Endothelial cell of umbilical vein (primary cell): ENCODE measurements at regions of chr11 and their contacts with region 1.

Region 1: DNA sequence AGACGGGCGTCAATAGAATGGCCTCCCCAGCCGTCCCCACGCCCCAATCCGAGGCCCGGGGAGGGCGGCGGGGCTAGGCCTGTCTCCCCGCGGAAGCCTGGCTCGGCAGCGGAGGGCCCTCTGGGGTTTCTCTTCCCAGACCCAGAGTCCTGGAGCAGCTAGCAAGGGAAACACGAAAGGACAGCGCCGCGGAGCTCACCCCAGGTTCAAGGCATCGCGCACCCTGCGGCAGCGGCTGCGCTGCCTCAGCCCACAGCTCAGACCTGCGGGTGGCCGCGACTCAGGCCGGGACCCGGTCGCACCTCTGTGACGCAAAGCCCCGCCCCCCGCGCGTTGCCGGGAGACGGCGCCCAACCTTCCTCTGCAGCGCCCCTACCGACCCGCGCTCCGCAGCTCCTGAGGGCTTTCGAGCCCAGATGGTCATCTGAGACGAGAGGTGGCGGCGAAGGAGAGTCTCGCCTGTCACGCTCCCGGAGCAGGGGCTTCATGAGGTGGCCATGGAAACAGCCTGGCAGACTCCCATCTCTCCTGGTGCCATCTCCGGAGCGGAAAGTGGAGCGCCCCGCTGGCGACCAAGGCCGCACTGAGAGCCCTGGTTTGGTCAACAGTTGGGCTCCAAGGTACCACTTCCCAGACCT is at the start of gene RNF141:
- DNase-seq: peak; percentile 94
- H3K4me3 ChIP-seq: peak within 1 kb of the TSS; percentile 37 to 83 (median 59)
- H3K27ac ChIP-seq: peak within 1 kb of the TSS; percentile 57
- H3K4me1 ChIP-seq: peaks cover 10% of the 10 kb centered on the region
- H3K27me3 ChIP-seq: no peaks in the 10 kb centered on the region
- CTCF ChIP-seq: peak; percentile 87 to 93
- POLR2A ChIP-seq: peak; percentile 94
- total RNA-seq, gene RNF141: 31.8 and 32.4 TPM in 2 replicates

Region 2: DNA sequence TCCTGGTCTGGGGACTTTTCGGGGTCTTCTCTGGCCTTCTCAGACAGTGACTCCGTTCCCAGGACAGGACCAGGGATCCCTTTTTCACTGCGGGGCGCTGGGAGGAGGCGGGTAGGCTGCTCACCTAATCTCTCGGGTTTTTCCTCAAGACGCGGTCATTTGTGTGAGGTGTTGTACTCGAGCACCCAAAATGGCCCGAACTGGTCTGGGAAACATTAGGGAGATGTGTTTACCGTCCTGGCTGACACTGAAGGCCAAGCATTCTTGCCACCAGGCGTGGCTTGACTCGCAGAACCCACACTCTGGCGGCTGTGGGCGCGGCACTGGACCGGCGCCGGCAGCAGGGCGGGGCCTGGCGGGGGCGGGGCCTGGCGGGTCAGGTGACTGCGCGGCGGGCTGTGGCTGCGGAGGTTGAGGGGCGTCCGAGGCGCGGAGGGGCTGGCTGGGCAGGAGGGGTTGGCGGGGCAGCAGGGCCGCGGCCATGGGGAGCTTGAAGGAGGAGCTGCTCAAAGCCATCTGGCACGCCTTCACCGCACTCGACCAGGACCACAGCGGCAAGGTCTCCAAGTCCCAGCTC is 877.3 kb before region 1 on chr11 and contains the start of gene SWAP70:
- CTCF ChIA-PET with region 1: no interaction called
- POLR2A ChIA-PET with region 1: no interaction called
- dilution Hi-C with region 1: no loop called
- intact Hi-C with region 1: loop called (anchors 5 kb)
- DNase-seq: peak; percentile 89
- H3K4me3 ChIP-seq: peak within 1 kb of the TSS; percentile 57 to 97 (median 63)
- H3K27ac ChIP-seq: peak within 1 kb of the TSS; percentile 93
- H3K4me1 ChIP-seq: peaks cover 18% of the 10 kb centered on the region
- H3K27me3 ChIP-seq: no peaks in the 10 kb centered on the region
- CTCF ChIP-seq: peak in 1 of 2 donors; percentile 41
- POLR2A ChIP-seq: peak; percentile 89
- total RNA-seq, gene SWAP70: 156 and 165 TPM in 2 replicates

Region 3: GRCh38 chr11:10044618-10045017 is 496.4 kb before region 1 on chr11:
- CTCF ChIA-PET with region 1: no interaction called
- POLR2A ChIA-PET with region 1: no interaction called
- dilution Hi-C with region 1: no loop called
- intact Hi-C with region 1: no loop called
- DNase-seq: no peak
- H3K4me3 ChIP-seq: no peak overlapping the region
- H3K27ac ChIP-seq: no peak overlapping the region
- H3K4me1 ChIP-seq: peaks cover 5% of the 10 kb centered on the region
- H3K27me3 ChIP-seq: no peaks in the 10 kb centered on the region
- CTCF ChIP-seq: no peak
- POLR2A ChIP-seq: no peak

Region 4: GRCh38 chr11:10181811-10182210 is 359.2 kb before region 1 on chr11:
- CTCF ChIA-PET with region 1: no interaction called
- POLR2A ChIA-PET with region 1: no interaction called
- dilution Hi-C with region 1: no loop called
- intact Hi-C with region 1: no loop called
- DNase-seq: peak; percentile 48
- H3K4me3 ChIP-seq: no peak overlapping the region
- H3K27ac ChIP-seq: no peak overlapping the region
- H3K4me1 ChIP-seq: no peaks in the 10 kb centered on the region
- H3K27me3 ChIP-seq: no peaks in the 10 kb centered on the region
- CTCF ChIP-seq: peak; percentile 14 to 16
- POLR2A ChIP-seq: no peak

Region 5: DNA sequence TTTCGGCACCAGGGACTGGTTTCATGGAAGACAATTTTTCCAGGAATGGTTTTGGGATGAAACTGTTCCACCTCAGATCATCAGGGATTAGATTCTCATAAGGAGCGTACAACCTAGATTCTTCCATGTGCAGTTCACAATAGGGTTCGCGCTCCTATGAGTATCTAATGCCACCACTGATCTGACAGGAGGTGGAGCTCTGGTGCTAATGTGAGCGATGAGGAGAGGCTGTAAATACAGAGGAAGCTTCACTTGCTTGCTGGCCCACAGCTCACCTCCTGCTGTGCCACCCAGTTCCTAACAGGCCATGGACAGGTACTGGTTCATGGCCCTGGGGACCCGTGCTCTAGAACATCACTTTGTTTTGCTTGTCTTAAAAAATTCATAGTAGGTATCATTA is 127.8 kb before region 1 on chr11:
- CTCF ChIA-PET with region 1: interaction called, 10 read pairs
- POLR2A ChIA-PET with region 1: no interaction called
- dilution Hi-C with region 1: no loop called
- intact Hi-C with region 1: no loop called
- DNase-seq: peak; percentile 20
- H3K4me3 ChIP-seq: no peak overlapping the region
- H3K27ac ChIP-seq: no peak overlapping the region
- H3K4me1 ChIP-seq: peaks cover 13% of the 10 kb centered on the region
- H3K27me3 ChIP-seq: peaks cover 2 to 5% of the 10 kb centered on the region in 2 experiments
- CTCF ChIP-seq: peak in 1 of 2 donors; percentile 16
- POLR2A ChIP-seq: no peak

Region 6: DNA sequence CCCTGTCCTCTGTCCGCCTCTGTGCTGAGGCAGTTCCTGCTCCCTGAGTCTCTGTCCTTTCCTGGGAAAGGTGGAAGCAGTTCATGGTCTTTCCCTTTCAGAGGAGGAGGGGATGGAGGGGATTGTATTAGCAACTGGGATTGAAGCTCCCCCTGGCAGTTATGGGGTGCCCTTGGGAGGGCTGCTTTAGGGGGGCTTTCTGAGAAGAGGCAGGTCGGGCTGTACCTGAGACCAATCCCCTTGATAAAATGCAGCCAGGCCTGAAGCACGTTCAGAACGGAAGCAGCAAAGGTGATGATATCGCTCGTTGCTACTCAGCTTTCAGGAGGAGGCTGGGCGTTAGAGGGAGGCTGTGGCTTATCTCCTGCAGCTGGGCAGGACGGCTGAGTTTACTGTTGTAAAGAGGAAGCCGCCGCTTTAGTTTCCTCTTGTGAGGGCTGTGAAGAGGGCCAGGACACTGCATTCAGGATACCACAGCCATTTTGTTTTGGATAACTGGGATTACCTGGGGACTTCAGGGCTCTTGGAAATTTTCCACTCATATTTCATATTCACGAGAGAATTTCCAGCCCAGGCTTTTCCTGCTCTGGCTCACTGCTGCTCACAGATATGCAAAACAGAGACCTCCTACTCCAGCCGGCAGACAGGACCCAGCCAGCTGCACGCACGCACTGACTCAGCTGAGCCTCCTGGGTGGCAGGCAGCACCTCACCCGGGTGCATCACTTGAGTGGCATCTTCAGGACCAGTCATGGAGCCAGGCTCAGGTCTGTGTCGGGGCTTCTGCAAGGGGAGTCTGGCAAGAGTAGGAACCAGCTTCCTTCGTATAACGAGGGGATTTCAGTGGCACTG is 85.2 kb before region 1 on chr11:
- CTCF ChIA-PET with region 1: no interaction called
- POLR2A ChIA-PET with region 1: no interaction called
- dilution Hi-C with region 1: no loop called
- intact Hi-C with region 1: no loop called
- DNase-seq: peak; percentile 38
- H3K4me3 ChIP-seq: peak overlapping the region in 1 of 3 experiments; percentile 11
- H3K27ac ChIP-seq: no peak overlapping the region
- H3K4me1 ChIP-seq: peaks cover 4% of the 10 kb centered on the region
- H3K27me3 ChIP-seq: peaks cover 0 to 11% of the 10 kb centered on the region in 2 experiments
- CTCF ChIP-seq: no peak
- POLR2A ChIP-seq: no peak

Region 7: DNA sequence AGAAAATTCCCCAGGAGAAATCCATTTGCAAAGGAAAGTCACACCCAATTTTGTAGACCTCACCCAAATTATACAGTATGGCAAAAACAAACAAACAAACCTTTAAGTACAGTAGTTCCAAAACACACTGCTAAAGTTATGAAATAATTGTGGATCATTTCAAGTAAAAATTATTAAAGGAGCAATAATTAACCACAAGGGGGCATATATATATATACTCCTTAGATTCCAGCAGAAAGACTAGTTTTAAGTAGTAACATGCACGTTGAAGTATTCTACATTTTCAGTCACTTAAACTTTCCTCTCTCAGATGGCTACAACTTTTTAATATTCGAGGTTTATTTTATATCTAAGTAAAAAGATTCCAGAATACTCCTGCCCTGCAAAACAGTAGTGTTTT is 26.8 kb before region 1 on chr11:
- CTCF ChIA-PET with region 1: interaction called, 31 read pairs
- POLR2A ChIA-PET with region 1: interaction called, 4 read pairs
- dilution Hi-C with region 1: no loop called
- intact Hi-C with region 1: loop called (anchors 1 kb)
- DNase-seq: peak; percentile 52
- H3K4me3 ChIP-seq: no peak overlapping the region
- H3K27ac ChIP-seq: no peak overlapping the region
- H3K4me1 ChIP-seq: peaks cover 7% of the 10 kb centered on the region
- H3K27me3 ChIP-seq: no peaks in the 10 kb centered on the region
- CTCF ChIP-seq: peak; percentile 5 to 10
- POLR2A ChIP-seq: no peak

Region 8: GRCh38 chr11:10558288-10558687 is 17.2 kb after region 1 on chr11:
- CTCF ChIA-PET with region 1: interaction called, 20 read pairs
- POLR2A ChIA-PET with region 1: no interaction called
- dilution Hi-C with region 1: no loop called
- intact Hi-C with region 1: loop called (anchors 2 kb)
- DNase-seq: no peak
- H3K4me3 ChIP-seq: no peak overlapping the region
- H3K27ac ChIP-seq: no peak overlapping the region
- H3K4me1 ChIP-seq: peaks cover 5% of the 10 kb centered on the region
- H3K27me3 ChIP-seq: no peaks in the 10 kb centered on the region
- CTCF ChIP-seq: no peak
- POLR2A ChIP-seq: no peak

Region 9: DNA sequence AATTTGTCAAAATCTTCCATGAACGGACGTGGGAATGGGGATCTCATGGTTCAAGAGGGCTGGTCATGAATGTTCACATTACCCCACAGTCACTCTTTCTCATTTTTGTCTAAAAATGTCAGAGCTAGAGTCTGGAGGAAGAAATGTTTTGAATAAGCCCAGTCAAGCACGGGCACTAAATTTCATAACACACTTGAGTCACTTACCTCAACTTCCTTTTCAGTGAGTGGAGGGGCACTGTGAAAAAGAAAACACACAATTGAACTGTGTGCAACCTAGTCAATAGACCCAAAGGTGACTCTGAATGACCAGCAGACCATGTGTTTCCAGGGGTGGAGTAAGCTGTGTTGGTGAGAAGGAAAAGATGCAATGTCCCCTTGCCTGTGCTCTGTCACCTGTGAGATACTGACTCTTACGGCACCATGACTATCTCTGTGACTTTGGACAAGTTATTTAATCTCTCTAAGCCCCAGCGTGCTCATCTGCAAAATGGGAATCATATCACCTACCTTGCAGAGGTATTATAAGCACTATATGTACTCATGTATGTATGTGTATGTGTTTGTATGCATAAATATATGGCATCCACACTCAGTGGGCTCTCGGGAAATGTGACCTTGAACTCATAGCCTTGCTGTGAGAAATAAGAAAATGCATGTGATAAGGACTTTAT is 65.6 kb after region 1 on chr11:
- CTCF ChIA-PET with region 1: interaction called, 9 read pairs
- POLR2A ChIA-PET with region 1: interaction called, 3 read pairs
- dilution Hi-C with region 1: no loop called
- intact Hi-C with region 1: loop called (anchors 2 kb)
- DNase-seq: peak; percentile 79
- H3K4me3 ChIP-seq: no peak overlapping the region
- H3K27ac ChIP-seq: peak overlapping the region; percentile 25
- H3K4me1 ChIP-seq: peaks cover 29% of the 10 kb centered on the region
- H3K27me3 ChIP-seq: peaks cover 0 to 1% of the 10 kb centered on the region in 2 experiments
- CTCF ChIP-seq: no peak
- POLR2A ChIP-seq: no peak

Region 10: DNA sequence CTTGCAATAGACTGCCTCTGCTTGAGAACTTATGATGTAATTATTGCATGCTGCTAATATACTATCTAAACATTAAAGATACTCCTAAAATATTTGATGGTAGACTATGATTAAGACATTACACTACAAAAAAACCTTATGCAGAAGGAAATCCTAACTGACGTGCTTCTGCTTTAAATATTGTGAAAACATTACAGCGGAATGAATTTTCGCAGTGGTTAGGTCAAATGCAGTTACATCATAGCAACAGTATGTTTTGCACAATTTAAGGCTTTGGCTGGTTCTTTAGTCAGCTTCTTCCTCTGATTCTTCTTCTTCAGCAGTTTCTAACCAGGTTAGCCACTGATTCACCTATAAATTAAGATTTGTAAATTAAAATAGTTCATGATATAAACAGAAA is 256.5 kb after region 1 on chr11:
- CTCF ChIA-PET with region 1: no interaction called
- POLR2A ChIA-PET with region 1: no interaction called
- dilution Hi-C with region 1: no loop called
- intact Hi-C with region 1: no loop called
- DNase-seq: no peak
- H3K4me3 ChIP-seq: no peak overlapping the region
- H3K27ac ChIP-seq: no peak overlapping the region
- H3K4me1 ChIP-seq: no peaks in the 10 kb centered on the region
- H3K27me3 ChIP-seq: no peaks in the 10 kb centered on the region
- CTCF ChIP-seq: no peak
- POLR2A ChIP-seq: no peak